Right ventricle myocardium inferior (tissue), 1 donor: ENCODE measurements at regions of chr4 and their contacts with region 1.

Region 1: DNA sequence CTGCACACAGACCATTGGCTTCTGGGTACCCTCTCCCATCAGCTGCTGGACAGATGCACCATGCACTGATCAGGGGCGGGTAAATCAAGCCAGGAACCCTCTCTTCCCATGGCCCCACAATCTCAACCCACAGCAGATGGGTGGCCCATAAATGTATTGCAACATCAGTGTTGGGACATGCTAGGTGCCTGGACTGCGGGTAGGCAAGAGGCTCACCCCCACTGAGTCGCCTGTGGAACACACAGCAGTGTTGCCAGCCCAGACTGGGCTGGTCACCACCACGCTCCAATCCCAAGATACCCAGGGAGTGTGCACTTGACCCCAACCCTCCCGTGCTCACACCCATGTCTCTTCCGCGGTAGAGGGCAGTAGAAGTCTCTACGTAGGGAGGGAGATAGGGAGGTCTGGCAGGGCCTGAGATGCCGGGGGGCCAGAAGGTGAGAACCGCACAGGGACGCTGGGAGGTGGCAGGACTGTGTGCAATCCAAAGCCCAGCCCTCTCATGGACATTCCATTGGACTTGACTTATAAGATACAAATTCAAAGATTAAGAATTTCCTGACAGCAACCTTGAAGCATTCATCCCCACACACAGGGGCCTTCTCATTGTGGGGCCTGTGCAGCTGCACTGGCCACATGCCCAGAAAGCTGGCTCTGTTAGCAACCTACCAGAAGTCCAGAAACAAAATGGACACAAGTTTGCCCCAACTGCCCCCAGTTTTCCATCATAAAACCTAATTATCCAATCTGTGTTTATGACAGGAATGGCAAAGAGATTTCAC is 183.7 kb downstream of the NSUN7 start:
- DNase-seq: no peak
- ATAC-seq: no peak

Region 2: DNA sequence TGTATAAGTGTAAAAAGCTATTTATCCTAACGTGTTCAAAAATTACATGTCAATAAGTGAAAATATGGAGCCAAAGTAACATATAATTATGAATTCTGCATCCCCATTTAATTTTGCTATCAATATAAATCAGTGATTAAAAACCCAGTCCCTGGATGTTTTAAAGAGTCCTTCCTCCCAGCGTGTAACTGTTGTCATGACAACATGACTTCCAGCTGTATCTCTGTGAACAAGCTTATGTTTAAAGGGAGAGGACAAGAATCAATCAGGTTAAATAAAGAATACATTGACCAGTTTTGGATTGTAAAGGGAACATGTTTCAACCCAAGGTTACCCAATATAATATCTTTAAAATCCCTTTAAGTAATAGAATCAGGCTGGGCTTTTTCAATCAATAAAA is 36.0 kb after region 1 on chr4:
- intact Hi-C with region 1: loop called (anchors 5 kb)
- DNase-seq: no peak
- ATAC-seq: no peak